MCF 10A (cell line): ENCODE measurements at regions of chr2 and their contacts with region 1.

Region 1: GRCh38 chr2:62456721-62457539 is 49.1 kb downstream of the TMEM17 start:
- DNase-seq: peak; percentile 70
- H3K4me3 Mint-ChIP-seq: peak overlapping the region; percentile 66
- H3K27ac Mint-ChIP-seq: peak overlapping the region; percentile 57
- H3K4me1 Mint-ChIP-seq: peaks cover 10% of the 10 kb centered on the region
- H3K27me3 Mint-ChIP-seq: no peaks in the 10 kb centered on the region
- CTCF ChIP-seq: peak; percentile 98

Region 2: GRCh38 chr2:61493523-61493942 is 963.4 kb before region 1 on chr2:
- CTCF ChIA-PET with region 1: no interaction called
- POLR2A ChIA-PET with region 1: no interaction called
- intact Hi-C with region 1: no loop called
- DNase-seq: peak; percentile 40
- H3K4me3 Mint-ChIP-seq: no peak overlapping the region
- H3K27ac Mint-ChIP-seq: no peak overlapping the region
- H3K4me1 Mint-ChIP-seq: peaks cover 11% of the 10 kb centered on the region
- H3K27me3 Mint-ChIP-seq: no peaks in the 10 kb centered on the region
- CTCF ChIP-seq: no peak

Region 3: DNA sequence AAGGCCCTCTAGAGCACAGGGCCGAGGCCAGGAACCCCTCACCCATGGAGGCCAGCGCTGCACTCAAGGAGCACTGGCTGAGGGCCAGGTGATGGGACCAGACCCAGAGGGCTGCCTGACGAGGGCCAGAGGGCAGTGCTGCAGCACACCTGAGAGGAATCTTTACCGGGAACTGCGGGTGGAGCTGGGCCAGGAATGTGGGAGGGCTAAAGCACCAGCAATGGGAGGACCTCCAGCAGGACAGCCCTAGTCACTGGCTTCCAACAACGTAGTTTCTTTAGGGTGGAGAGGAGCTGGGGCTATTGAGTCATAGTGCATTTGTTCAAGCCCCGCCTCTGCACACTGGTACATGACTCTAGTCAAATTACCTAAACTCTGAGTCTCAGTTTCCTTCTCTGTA is 94.4 kb before region 1 on chr2:
- CTCF ChIA-PET with region 1: no interaction called
- POLR2A ChIA-PET with region 1: no interaction called
- intact Hi-C with region 1: no loop called
- DNase-seq: peak; percentile 74
- H3K4me3 Mint-ChIP-seq: no peak overlapping the region
- H3K27ac Mint-ChIP-seq: no peak overlapping the region
- H3K4me1 Mint-ChIP-seq: peaks cover 6% of the 10 kb centered on the region
- H3K27me3 Mint-ChIP-seq: no peaks in the 10 kb centered on the region
- CTCF ChIP-seq: no peak

Region 4: GRCh38 chr2:62475172-62476011 is 18.5 kb after region 1 on chr2:
- CTCF ChIA-PET with region 1: interaction called, 15 read pairs
- POLR2A ChIA-PET with region 1: interaction called, 5 read pairs
- intact Hi-C with region 1: no loop called
- DNase-seq: no peak
- H3K4me3 Mint-ChIP-seq: no peak overlapping the region
- H3K27ac Mint-ChIP-seq: no peak overlapping the region
- H3K4me1 Mint-ChIP-seq: peaks cover 7% of the 10 kb centered on the region
- H3K27me3 Mint-ChIP-seq: no peaks in the 10 kb centered on the region
- CTCF ChIP-seq: no peak

Region 5: GRCh38 chr2:62604336-62604735 is 147.4 kb after region 1 on chr2:
- CTCF ChIA-PET with region 1: interaction called, 12 read pairs
- POLR2A ChIA-PET with region 1: no interaction called
- intact Hi-C with region 1: no loop called
- DNase-seq: peak; percentile 79
- H3K4me3 Mint-ChIP-seq: no peak overlapping the region
- H3K27ac Mint-ChIP-seq: no peak overlapping the region
- H3K4me1 Mint-ChIP-seq: peaks cover 12% of the 10 kb centered on the region
- H3K27me3 Mint-ChIP-seq: no peaks in the 10 kb centered on the region
- CTCF ChIP-seq: no peak

Region 6: GRCh38 chr2:62774555-62775366 is 317.8 kb after region 1 on chr2:
- CTCF ChIA-PET with region 1: interaction called, 266 read pairs
- POLR2A ChIA-PET with region 1: interaction called, 29 read pairs
- intact Hi-C with region 1: loop called (anchors 1 kb)
- DNase-seq: peak; percentile 62
- H3K4me3 Mint-ChIP-seq: no peak overlapping the region
- H3K27ac Mint-ChIP-seq: peak overlapping the region; percentile 51
- H3K4me1 Mint-ChIP-seq: peaks cover 4% of the 10 kb centered on the region
- H3K27me3 Mint-ChIP-seq: no peaks in the 10 kb centered on the region
- CTCF ChIP-seq: peak; percentile 76

Region 7: GRCh38 chr2:63189026-63189425 is 732.1 kb after region 1 on chr2:
- CTCF ChIA-PET with region 1: no interaction called
- POLR2A ChIA-PET with region 1: no interaction called
- intact Hi-C with region 1: loop called (anchors 2 kb)
- DNase-seq: peak; percentile 77
- H3K4me3 Mint-ChIP-seq: peak overlapping the region; percentile 31
- H3K27ac Mint-ChIP-seq: no peak overlapping the region
- H3K4me1 Mint-ChIP-seq: peaks cover 6% of the 10 kb centered on the region
- H3K27me3 Mint-ChIP-seq: no peaks in the 10 kb centered on the region
- CTCF ChIP-seq: peak; percentile 90